HCT116 (cell line): ENCODE measurements at regions of chr22 and their contacts with region 1.

Region 1: DNA sequence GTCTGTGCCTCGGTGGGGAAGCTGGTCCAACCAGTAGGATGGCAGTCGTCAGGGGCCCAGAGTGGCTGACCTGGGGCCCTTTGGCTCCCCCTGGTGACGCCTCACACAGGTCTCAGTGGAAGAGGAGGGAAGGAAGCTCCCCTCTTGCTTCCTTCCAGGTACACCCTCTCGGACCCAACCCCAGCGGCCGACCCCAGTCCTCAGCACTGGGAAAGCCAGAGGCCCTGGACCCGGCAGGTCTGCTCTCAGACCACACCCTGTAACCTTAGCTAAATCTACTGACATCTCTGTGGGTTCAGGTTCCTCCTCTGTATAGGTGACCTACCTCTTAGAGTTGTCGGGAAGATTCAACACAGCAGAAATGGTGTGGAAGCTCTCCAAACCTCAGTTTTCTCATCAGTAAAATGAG is 3.4 kb upstream of the SCUBE1 start:
- DNase-seq: peak; percentile 42
- ATAC-seq: peak; percentile 90
- H3K4me3 ChIP-seq: no peak overlapping the region
- H3K27ac ChIP-seq: no peak overlapping the region
- H3K4me1 ChIP-seq: peaks cover 0 to 15% of the 10 kb centered on the region in 2 experiments; a peak in 3 of 4 replicates
- H3K27me3 ChIP-seq: no peaks in the 10 kb centered on the region
- CTCF ChIP-seq: peak; percentile 68 to 88 (median 70); a peak in 5 of 6 replicates
- POLR2A ChIP-seq: no peak
- RAD21 ChIP-seq: peak; percentile 76

Region 2: GRCh38 chr22:43187171-43188099 is 159.1 kb before region 1 on chr22:
- CTCF ChIA-PET with region 1: interaction called, 11 read pairs
- POLR2A ChIA-PET with region 1: no interaction called
- RAD21 ChIA-PET with region 1: no interaction called
- intact Hi-C with region 1: no loop called
- DNase-seq: peak; percentile 90
- ATAC-seq: peak; percentile 89
- H3K4me3 ChIP-seq: peak overlapping the region; percentile 73 to 83
- H3K27ac ChIP-seq: peak overlapping the region; percentile 64
- H3K4me1 ChIP-seq: peaks cover 9 to 36% of the 10 kb centered on the region in 2 experiments; a peak in 3 of 4 replicates
- H3K27me3 ChIP-seq: no peaks in the 10 kb centered on the region
- CTCF ChIP-seq: peak; percentile 32 to 65 (median 45); a peak in 5 of 6 replicates
- POLR2A ChIP-seq: peak; percentile 95
- RAD21 ChIP-seq: no peak; the same call in 1 of the 2 replicates

Region 3: DNA sequence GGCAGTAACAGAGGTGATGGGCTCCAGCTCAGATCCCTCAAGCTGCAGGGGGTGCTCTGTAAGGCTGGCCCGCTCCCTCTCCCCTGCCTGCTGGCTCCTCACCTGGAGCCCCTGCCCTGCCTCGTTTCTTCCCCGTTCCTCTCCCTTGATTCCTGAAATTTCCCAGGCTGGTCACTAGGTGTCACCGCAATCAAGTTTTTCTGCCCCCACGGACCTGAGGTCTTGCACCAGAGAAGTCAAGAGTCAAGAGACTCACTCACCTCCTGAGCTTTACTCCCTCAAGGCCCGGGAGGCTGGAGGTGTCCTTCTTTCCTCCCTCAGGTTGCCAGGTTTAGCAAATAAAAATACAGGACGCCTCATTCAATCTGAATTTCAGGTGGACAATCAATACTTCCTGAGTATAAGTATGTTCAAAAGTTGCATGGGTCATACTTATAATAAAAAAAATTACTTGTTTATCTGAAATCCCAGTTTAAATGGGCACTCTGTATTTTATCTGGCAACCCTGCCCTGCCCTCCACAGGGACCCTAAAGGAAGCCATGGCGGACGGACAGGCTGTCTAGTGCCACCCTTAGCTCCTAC is 72.5 kb before region 1 on chr22:
- CTCF ChIA-PET with region 1: interaction called, 143 read pairs
- POLR2A ChIA-PET with region 1: interaction called, 4 read pairs
- RAD21 ChIA-PET with region 1: interaction called, 13 to 25 read pairs
- intact Hi-C with region 1: loop called (anchors 1 kb)
- DNase-seq: peak; percentile 47
- ATAC-seq: peak; percentile 81
- H3K4me3 ChIP-seq: no peak overlapping the region
- H3K27ac ChIP-seq: no peak overlapping the region
- H3K4me1 ChIP-seq: peaks cover 18 to 39% of the 10 kb centered on the region in 2 experiments
- H3K27me3 ChIP-seq: no peaks in the 10 kb centered on the region
- CTCF ChIP-seq: peak; percentile 70 to 81 (median 76)
- POLR2A ChIP-seq: no peak
- RAD21 ChIP-seq: peak; percentile 88

Region 4: DNA sequence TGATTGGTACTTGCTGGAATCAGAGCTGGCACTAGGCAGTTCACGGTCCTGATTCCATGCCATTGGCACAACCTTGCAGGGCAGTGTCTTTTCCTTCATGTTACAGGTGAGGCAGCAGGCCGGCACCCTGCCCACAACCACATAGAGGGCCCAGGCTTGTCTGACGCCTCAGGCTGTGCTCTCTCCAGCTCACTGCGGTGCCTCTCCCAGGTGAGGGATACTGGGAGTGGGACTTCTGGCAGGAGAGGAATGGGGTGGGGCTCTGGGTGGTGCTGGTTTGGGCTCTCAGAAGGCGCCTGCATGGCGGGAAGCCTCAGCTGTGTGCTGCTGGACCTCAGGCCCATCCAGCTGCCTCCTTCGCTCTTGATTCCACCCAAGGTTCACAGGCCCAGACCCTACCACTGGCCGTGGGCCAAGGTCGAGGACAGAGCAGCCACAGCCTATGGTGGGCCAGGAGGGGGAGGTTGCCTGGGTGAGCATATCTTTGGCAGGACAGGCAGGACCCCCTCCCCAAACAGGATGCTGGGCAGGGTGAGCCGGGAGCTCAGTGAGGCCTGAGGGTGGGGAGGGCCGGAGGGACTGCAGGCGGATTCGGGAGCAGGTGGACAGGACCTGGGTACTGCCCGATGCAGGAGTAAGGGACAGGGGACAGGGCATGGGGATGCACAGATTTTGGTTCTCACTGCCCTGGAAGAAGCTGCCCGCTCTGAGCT is 58.3 kb after region 1 on chr22:
- CTCF ChIA-PET with region 1: no interaction called
- POLR2A ChIA-PET with region 1: no interaction called
- RAD21 ChIA-PET with region 1: no interaction called
- intact Hi-C with region 1: no loop called
- DNase-seq: no peak
- ATAC-seq: peak; percentile 57
- H3K4me3 ChIP-seq: no peak overlapping the region
- H3K27ac ChIP-seq: no peak overlapping the region
- H3K4me1 ChIP-seq: no peaks in the 10 kb centered on the region
- H3K27me3 ChIP-seq: 0 out of 2 replicates have a peak, but pooled peaks cover under 1% of the 10 kb centered on the region
- CTCF ChIP-seq: no peak
- POLR2A ChIP-seq: no peak
- RAD21 ChIP-seq: no peak